BJ (cell line): ENCODE measurements at regions of chr12 and their contacts with region 1.

Region 1: DNA sequence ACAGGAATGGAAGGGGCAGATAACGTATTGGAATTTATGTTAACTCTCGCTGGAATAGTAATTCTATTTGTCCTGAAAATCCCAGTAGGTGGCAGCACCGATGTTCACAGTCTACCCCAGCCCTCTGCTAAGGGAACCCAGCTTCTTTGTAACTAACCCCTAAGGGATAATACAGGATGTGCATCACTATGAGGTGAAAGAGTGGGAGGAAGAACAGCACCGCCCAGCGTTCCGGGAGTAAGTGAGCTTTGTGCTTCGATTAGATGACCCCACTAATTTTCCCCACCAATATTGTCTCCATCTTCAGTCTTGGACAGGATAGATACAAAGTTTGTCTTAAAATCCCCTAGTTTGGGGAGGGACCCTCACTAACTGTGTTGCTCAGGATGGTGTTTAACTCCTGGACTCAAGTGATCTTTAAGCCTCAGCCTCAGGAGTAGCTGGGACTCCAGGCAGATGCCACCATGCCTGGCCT is 2.7 kb downstream of the SLC2A3 start:
- DNase-seq: peak; percentile 73
- H3K4me3 ChIP-seq: peak overlapping the region; percentile 75
- H3K27me3 ChIP-seq: no peaks in the 10 kb centered on the region
- CTCF ChIP-seq: peak; percentile 69

Region 2: DNA sequence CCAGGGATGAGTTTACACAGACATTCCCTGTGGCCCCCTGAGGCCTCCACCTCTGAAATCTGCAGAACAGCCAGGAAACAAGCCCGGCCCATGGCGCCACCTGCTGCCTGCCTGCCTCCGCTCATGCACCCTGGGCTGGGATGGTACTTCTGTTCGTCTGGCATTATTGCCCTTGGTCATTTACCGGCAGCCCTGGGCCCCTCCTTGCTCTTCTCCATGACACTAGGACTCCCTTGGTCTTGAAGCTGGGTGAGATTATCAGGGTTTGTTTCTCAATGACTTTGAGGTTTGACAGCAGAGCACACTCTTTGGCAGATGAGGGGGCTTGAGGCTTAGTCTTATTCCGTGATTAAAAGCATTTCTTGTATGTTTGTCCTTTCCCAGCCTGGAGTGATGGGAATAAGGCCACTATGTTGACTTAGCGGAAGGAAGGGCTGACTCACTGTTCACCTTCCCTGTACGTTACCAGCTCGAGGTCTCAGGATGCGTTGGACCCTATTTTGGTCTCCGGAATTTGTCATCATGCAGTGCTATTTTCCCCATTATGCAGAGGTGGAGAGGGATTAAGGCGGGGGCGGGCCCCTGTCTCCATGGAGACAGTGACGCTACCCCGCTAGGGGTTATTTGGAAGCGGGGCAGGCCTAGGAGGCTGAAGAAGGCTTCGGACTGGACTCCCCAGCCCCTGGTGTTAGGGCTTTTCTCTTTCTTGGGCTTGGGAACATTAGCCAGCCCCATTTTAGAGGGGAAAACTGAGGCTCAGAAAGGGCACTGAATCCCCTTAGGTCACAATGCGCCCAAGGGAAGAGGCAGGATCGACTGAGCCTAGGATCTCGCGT is 744.5 kb before region 1 on chr12:
- CTCF ChIA-PET with region 1: no interaction called
- POLR2A ChIA-PET with region 1: interaction called, 11 read pairs
- DNase-seq: peak; percentile 20
- H3K4me3 ChIP-seq: peak overlapping the region; percentile 96
- H3K27me3 ChIP-seq: no peaks in the 10 kb centered on the region
- CTCF ChIP-seq: peak; percentile 87

Region 3: GRCh38 chr12:7498832-7499231 is 434.5 kb before region 1 on chr12:
- CTCF ChIA-PET with region 1: no interaction called
- POLR2A ChIA-PET with region 1: no interaction called
- DNase-seq: peak; percentile 82
- H3K4me3 ChIP-seq: no peak overlapping the region
- H3K27me3 ChIP-seq: no peaks in the 10 kb centered on the region
- CTCF ChIP-seq: no peak

Region 4: GRCh38 chr12:7716381-7716780 is 216.9 kb before region 1 on chr12:
- CTCF ChIA-PET with region 1: no interaction called
- POLR2A ChIA-PET with region 1: no interaction called
- DNase-seq: no peak
- H3K4me3 ChIP-seq: no peak overlapping the region
- H3K27me3 ChIP-seq: no peaks in the 10 kb centered on the region
- CTCF ChIP-seq: no peak

Region 5: DNA sequence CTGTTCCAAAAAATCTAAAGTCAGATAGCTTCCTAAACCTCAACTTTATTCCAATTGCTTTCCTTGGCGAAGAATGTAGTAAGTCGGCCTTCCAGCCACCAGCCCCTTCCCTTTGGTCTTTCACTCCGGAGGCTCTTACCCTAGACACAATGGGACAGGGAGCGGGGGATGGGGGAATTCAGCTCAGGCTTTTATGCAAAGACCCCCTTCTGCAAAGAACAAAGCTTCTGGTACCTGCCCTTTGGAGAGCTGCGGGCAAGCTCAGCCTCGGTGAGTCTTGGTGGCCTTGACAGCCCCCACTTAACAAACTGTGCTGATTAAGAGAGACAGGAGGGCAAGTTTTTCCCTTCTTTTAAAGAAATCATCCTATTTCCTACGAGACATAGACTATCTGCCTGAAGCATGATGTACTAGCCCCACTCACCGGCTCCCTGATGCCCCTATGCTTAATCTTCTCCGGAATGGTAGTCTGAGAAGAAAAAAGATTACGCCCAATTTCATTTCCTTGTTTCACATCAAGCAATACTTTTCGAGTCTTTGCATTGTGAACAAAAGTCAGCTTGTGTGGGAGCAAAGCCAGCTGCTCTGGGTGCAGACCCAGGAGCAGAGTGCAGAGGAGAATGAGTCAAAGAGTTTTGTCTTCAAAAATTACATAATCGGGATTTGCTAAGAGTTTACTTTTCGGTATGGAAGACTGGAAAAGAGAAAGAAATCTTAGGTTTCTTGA is 145.6 kb before region 1 on chr12:
- CTCF ChIA-PET with region 1: no interaction called
- POLR2A ChIA-PET with region 1: no interaction called
- DNase-seq: no peak
- H3K4me3 ChIP-seq: no peak overlapping the region
- H3K27me3 ChIP-seq: peaks cover 5% of the 10 kb centered on the region
- CTCF ChIP-seq: no peak

Region 6: GRCh38 chr12:7948589-7949260 is 15.4 kb after region 1 on chr12:
- CTCF ChIA-PET with region 1: interaction called, 10 read pairs
- POLR2A ChIA-PET with region 1: interaction called, 11 read pairs
- DNase-seq: no peak
- H3K4me3 ChIP-seq: no peak overlapping the region
- H3K27me3 ChIP-seq: no peaks in the 10 kb centered on the region
- CTCF ChIP-seq: no peak

Region 7: GRCh38 chr12:7970475-7971252 is 37.4 kb after region 1 on chr12:
- CTCF ChIA-PET with region 1: interaction called, 14 read pairs
- POLR2A ChIA-PET with region 1: interaction called, 13 read pairs
- DNase-seq: peak; percentile 97
- H3K4me3 ChIP-seq: peak overlapping the region; percentile 33
- H3K27me3 ChIP-seq: no peaks in the 10 kb centered on the region
- CTCF ChIP-seq: no peak

Region 8: DNA sequence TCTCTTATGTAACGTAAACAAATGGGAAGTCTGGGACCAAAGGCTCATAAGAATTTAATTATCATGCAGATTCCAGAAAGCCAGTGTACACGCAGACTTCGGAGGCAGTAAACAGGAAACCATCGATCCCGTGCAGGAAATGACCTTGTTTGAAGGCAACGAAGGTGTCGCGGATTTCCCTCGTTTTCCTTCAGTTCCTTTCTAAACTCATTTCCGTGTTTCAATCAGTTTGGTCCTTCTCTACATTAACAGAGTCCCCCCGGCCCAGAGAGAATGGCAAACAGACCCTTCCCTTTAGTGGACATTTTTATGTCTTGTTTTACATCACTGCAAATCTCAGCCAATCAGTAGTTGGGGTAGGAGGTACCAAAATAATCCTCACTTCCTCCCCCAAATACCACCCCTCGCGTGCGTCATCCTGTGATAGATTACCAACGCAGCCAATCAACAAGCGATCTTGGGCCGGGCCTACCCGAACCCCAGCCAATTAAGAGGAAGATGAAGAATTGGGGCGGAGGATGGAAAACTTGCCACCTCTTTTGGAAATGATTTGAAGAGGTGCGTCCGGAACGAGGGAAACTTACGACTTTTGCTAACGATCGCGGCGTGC is 93.1 kb after region 1 on chr12:
- CTCF ChIA-PET with region 1: interaction called, 3 read pairs
- POLR2A ChIA-PET with region 1: interaction called, 23 read pairs
- DNase-seq: peak; percentile 97
- H3K4me3 ChIP-seq: peak overlapping the region; percentile 73
- H3K27me3 ChIP-seq: no peaks in the 10 kb centered on the region
- CTCF ChIP-seq: no peak